Mammary epithelial cell (primary cell): ENCODE measurements at regions of chr19 and their contacts with region 1.

Region 1: DNA sequence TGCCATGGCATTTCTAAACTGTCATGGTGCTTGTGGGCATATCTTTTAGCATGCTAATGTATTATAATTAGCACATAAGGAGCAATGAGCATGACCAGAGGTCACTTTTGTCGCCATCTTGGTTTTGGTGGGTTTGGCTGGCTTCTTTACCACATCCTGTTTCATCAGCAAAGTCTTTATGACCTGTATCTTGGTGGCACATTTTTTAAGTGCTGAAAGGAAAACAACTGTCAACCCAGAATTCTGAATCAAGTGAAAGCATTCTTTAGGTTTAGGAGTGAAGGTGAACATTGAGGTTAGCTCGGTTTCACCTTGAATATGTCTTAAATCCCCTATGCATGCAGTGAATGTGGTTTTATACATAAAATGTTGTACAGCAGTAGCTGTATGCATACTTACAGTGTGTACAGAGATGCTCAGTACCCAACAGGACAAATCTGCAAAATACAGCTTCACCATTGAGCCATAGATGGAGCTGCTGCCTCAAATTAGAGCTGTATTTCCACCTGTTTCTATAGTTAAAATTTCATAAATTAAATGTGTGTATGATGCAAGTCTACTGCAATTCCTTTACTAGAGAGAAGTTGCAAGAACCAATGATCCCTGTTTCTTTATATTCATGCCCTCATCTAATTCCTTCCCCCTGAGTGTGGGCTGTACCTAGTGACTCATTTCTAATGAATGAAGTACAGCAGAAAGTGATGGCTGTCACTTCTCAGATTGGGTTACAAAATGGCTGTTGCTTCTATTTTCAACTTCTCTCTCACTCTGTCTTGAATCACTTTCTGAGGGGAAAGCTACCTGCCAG is 25.2 kb upstream of the IGSF23 start:
- DNase-seq: peak; percentile 74
- H3K4me3 ChIP-seq: no peak overlapping the region
- H3K27ac ChIP-seq: peak overlapping the region; percentile 76
- H3K4me1 ChIP-seq: peaks cover 20% of the 10 kb centered on the region
- H3K27me3 ChIP-seq: no peaks in the 10 kb centered on the region
- CTCF ChIP-seq: peak; percentile 13 to 52

Region 2: DNA sequence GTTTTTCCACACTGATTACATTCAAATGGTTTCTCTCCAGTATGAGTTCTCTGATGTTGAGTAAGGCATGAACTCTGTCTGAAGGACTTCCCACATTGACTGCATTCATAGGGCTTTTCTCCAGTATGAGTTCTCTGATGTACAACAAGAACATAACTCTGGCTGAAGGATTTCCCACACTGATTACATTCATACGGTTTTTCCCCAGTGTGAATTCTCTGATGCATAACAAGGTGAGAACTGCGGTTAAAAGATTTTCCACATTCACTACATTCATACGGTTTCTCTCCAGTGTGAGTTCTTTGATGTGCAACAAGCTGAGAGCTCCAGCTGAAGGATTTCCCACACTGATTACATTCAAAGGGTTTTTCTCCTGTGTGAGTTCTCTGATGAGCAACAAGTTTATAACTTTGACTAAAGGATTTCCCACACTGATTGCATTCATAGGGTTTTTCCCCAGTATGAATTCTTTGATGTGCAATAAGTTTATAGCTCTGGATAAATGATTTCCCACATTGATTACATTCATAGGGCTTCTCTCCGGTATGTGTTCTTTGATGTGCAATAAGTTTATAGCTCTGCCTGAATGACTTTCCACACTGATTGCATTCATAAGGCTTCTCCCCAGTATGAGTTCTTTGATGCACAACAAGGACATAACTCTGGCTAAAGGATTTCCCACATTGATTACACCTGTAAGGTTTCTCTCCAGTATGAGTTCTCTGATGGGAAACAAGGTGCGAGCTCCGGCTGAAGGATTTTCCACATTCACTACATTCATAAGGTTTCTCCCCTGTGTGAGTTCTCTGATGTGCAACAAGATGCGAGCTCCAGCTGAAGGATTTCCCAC is 111.4 kb before region 1 on chr19:
- CTCF ChIA-PET with region 1: no interaction called
- dilution Hi-C with region 1: no loop called
- in situ Hi-C with region 1: no loop called
- intact Hi-C with region 1: no loop called
- DNase-seq: peak; percentile 14
- H3K4me3 ChIP-seq: no peak overlapping the region
- H3K27ac ChIP-seq: no peak overlapping the region
- H3K4me1 ChIP-seq: no peaks in the 10 kb centered on the region
- H3K27me3 ChIP-seq: no peaks in the 10 kb centered on the region
- CTCF ChIP-seq: no peak

Region 3: DNA sequence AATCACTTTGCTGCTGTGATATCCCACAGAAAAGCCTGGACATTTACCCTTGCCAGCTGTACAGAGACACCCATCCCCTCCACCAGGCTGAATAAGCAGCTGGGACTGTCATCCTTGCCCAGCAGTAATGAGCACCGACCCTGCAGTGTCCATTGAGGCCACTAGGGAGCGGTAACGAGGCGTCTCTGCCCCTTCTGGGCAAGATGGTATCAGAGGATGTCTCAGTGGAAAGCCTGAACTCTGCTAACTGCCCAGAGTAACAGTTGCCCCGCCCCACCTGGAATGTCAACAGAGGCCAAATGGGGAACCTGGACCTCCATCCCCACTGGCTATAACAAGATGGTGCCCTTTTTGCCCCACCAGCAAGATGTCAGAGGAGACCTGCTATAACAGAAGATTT is 35.8 kb before region 1 on chr19:
- CTCF ChIA-PET with region 1: interaction called, 3 read pairs
- dilution Hi-C with region 1: loop called (anchors 5 kb)
- in situ Hi-C with region 1: no loop called
- intact Hi-C with region 1: loop called (anchors 1 kb)
- DNase-seq: peak; percentile 45
- H3K4me3 ChIP-seq: no peak overlapping the region
- H3K27ac ChIP-seq: no peak overlapping the region
- H3K4me1 ChIP-seq: peaks cover 34% of the 10 kb centered on the region
- H3K27me3 ChIP-seq: no peaks in the 10 kb centered on the region
- CTCF ChIP-seq: peak; percentile 77 to 89

Region 4: DNA sequence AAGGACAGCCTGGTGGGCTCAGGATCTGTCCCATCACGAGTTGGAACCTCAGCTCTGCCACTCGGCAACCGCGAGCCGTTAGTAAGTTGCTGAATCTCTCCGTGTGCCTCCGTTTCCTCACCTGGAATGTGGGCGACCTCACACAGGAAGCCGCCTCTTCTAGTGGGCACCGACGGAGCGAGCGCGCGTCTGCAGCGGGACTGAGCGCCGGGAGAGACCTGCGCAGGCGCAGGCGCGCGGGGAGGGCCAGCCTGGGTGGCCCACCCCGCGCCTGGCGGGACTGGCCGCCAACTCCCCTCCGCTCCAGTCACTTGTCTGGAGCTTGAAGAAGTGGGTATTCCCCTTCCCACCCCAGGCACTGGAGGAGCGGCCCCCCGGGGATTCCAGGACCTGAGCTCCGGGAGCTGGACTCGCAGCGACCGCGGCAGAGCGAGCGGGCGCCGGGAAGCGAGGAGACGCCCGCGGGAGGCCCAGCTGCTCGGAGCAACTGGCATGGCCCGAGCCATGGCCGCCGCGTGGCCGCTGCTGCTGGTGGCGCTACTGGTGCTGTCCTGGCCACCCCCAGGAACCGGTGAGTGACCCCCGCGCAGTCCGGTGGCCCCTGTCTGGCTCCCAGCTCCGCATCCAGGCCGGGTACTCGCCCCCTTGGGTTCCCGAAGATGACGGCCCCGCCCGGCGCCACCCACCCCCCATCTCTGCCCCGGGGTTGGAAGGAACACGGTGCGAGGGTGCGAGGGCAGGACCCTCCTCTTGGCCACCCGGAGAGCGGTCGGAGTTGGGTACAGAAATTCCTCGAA is 55.6 kb after region 1 on chr19 and contains the start of gene PVR:
- CTCF ChIA-PET with region 1: interaction called, 8 read pairs
- dilution Hi-C with region 1: no loop called
- in situ Hi-C with region 1: loop called in 1 of 2 experiments (anchors 5 kb)
- intact Hi-C with region 1: loop called (anchors 1 kb)
- DNase-seq: peak; percentile 79
- H3K4me3 ChIP-seq: peak within 1 kb of the TSS; percentile 73 to 94 (median 81)
- H3K27ac ChIP-seq: peak within 1 kb of the TSS; percentile 75
- H3K4me1 ChIP-seq: peaks cover 7% of the 10 kb centered on the region
- H3K27me3 ChIP-seq: no peaks in the 10 kb centered on the region
- CTCF ChIP-seq: no peak
- total RNA-seq, gene PVR: 85.9 to 120 TPM

Region 5: GRCh38 chr19:44689056-44689895 is 101.1 kb after region 1 on chr19:
- CTCF ChIA-PET with region 1: no interaction called
- dilution Hi-C with region 1: no loop called
- in situ Hi-C with region 1: no loop called
- intact Hi-C with region 1: no loop called
- DNase-seq: no peak
- H3K4me3 ChIP-seq: no peak overlapping the region
- H3K27ac ChIP-seq: no peak overlapping the region
- H3K4me1 ChIP-seq: peaks cover 23% of the 10 kb centered on the region
- H3K27me3 ChIP-seq: no peaks in the 10 kb centered on the region
- CTCF ChIP-seq: peak; percentile 87 to 94

Region 6: GRCh38 chr19:44723952-44724319 is 135.8 kb after region 1 on chr19:
- CTCF ChIA-PET with region 1: interaction called, 3 read pairs
- dilution Hi-C with region 1: no loop called
- in situ Hi-C with region 1: no loop called
- intact Hi-C with region 1: loop called (anchors 1 kb)
- DNase-seq: peak; percentile 70
- H3K4me3 ChIP-seq: no peak overlapping the region
- H3K27ac ChIP-seq: no peak overlapping the region
- H3K4me1 ChIP-seq: peaks cover 11% of the 10 kb centered on the region
- H3K27me3 ChIP-seq: no peaks in the 10 kb centered on the region
- CTCF ChIP-seq: peak; percentile 97 to 99